ENCODE measurements at regions of chr1 and their contacts with region 1.

Region 1: GRCh38 chr1:169893494-169894362 is at the start of gene SCYL3:
- DNase-seq: peak; percentile 82 to 99 (median 90)
- ATAC-seq: peak; percentile 84 to 85
- H3K4me3 Mint-ChIP-seq: peak within 1 kb of the TSS; percentile 88 to 97 (median 92)
- H3K27ac Mint-ChIP-seq: peak within 1 kb of the TSS; percentile 98 to 100 (median 99)
- H3K4me1 Mint-ChIP-seq: peaks cover 30 to 53% (median 45%) of the 10 kb centered on the region in 4 donors
- H3K27me3 Mint-ChIP-seq: peaks cover 0 to 9% (median 3%) of the 10 kb centered on the region in 5 donors
- polyA plus RNA-seq, gene SCYL3: 10.1 to 14.8 (median 14.7) TPM

Region 2: GRCh38 chr1:169794530-169795416 is 99.0 kb before region 1 on chr1 and contains the start of gene METTL18:
- POLR2A ChIA-PET with region 1: interaction called, 21 read pairs
- DNase-seq: peak; percentile 74 to 95 (median 91)
- ATAC-seq: peak; percentile 98
- H3K4me3 Mint-ChIP-seq: peak within 1 kb of the TSS; percentile 92 to 100 (median 99)
- H3K27ac Mint-ChIP-seq: peak within 1 kb of the TSS; percentile 96 to 100 (median 99)
- H3K4me1 Mint-ChIP-seq: peaks cover 21 to 55% (median 49%) of the 10 kb centered on the region in 4 donors
- H3K27me3 Mint-ChIP-seq: no peaks in the 10 kb centered on the region
- polyA plus RNA-seq, gene METTL18: 11.3 to 27.5 (median 17.5) TPM

Region 3: DNA sequence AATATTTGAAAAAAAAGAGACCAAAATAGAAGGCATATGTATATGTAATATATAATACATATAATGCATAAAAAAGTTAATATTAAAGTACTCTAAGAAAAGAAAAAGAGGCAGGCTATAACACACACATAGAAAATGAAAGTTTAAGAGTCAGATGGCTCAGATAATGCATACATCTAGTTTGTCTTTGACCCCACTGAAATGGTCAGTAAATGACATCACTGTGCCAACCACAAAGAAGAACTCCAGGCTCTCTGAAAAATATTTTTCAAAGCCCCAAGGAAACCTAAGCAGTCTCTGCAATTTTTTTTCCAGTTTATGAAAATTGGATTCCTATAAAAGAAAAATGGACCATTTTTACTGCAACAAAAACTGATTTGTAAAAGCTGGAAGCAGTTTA is 55.4 kb after region 1 on chr1:
- POLR2A ChIA-PET with region 1: no interaction called
- DNase-seq: no peak
- ATAC-seq: no peak
- H3K4me3 Mint-ChIP-seq: no peak overlapping the region
- H3K27ac Mint-ChIP-seq: no peak overlapping the region
- H3K4me1 Mint-ChIP-seq: peaks cover 0 to under 1% (median 0%) of the 10 kb centered on the region in 4 donors
- H3K27me3 Mint-ChIP-seq: no peaks in the 10 kb centered on the region

Region 4: GRCh38 chr1:170074250-170075157 is 180.8 kb after region 1 on chr1 and contains the start of gene KIFAP3:
- POLR2A ChIA-PET with region 1: interaction called, 22 read pairs
- DNase-seq: peak; percentile 86 to 97 (median 94)
- ATAC-seq: peak; percentile 91 to 93
- H3K4me3 Mint-ChIP-seq: peak within 1 kb of the TSS; percentile 86 to 99 (median 95)
- H3K27ac Mint-ChIP-seq: peak within 1 kb of the TSS; percentile 93 to 99 (median 96)
- H3K4me1 Mint-ChIP-seq: peaks cover 17 to 59% (median 55%) of the 10 kb centered on the region in 4 donors
- H3K27me3 Mint-ChIP-seq: no peaks in the 10 kb centered on the region
- polyA plus RNA-seq, gene KIFAP3: 10.0 to 17.9 (median 14.0) TPM